ENCODE measurements at regions of chr4 and their contacts with region 1.

Region 1: DNA sequence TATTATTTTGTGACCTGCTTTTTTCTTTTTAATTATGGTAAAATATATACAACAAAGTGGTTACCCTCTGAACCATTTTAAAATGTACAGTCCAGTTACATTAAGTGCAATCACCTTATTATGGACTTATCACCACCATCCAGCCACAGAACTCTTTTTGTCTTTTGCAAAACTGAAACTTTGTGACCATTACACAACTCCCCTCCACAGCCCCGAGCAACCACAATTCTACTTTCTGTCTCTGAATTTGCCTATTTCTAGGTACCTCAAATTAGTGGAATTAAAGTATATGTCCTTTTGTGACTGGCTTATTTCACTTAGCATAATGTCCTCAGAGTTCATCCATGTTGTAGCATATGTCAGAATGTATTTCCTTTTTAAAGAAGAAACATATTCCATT is 39.3 kb upstream of the WWC2 start:
- DNase-seq: no peak
- ATAC-seq: no peak
- H3K4me3 ChIP-seq: no peak overlapping the region
- H3K27ac ChIP-seq: no peak overlapping the region
- H3K4me1 ChIP-seq: peaks cover 0 to 7% (median 0%) of the 10 kb centered on the region in 12 donors
- H3K27me3 ChIP-seq: no peaks in the 10 kb centered on the region
- CTCF ChIP-seq: no peak
- POLR2A ChIP-seq: no peak

Region 2: GRCh38 chr4:182944484-182945213 is 115.1 kb before region 1 on chr4:
- intact Hi-C with region 1: loop called in 2 of 10 experiments (anchors 5 to 10 kb)
- DNase-seq: no peak
- ATAC-seq: no peak
- H3K4me3 ChIP-seq: no peak overlapping the region
- H3K27ac ChIP-seq: no peak overlapping the region
- H3K4me1 ChIP-seq: no peaks in the 10 kb centered on the region
- H3K27me3 ChIP-seq: no peaks in the 10 kb centered on the region
- CTCF ChIP-seq: no peak
- POLR2A ChIP-seq: no peak

Region 3: GRCh38 chr4:183100827-183101226 is 41.0 kb after region 1 on chr4:
- intact Hi-C with region 1: no loop called
- DNase-seq: no peak
- ATAC-seq: no peak
- H3K4me3 ChIP-seq: peak overlapping the region in 10 of 12 donors; percentile 7 to 92 (median 81)
- H3K27ac ChIP-seq: peak overlapping the region in 2 of 12 donors; percentile 96 to 98
- H3K4me1 ChIP-seq: peaks cover 0 to 42% (median 21%) of the 10 kb centered on the region in 12 donors
- H3K27me3 ChIP-seq: peaks cover 0 to 18% (median 0%) of the 10 kb centered on the region in 9 donors
- CTCF ChIP-seq: no peak
- POLR2A ChIP-seq: no peak

Region 4: DNA sequence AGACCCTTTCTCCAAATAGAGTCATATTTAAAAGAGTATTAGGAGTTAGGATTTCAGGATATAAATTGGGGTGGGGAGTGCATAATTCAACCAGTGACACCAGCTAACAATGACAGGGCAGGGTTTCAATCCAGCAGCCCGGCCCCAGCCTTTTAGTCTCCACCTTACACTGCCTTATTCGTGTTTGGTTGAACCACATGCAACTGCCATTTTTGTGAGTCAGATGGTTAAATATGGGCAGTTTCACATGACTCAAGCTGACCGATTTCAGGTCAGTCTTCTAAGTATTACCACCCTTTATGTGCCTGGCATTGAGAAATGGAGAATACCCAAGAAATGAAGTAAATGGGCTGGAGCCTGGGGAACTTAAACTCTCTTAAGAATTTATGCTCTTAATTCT is 948.1 kb after region 1 on chr4:
- intact Hi-C with region 1: no loop called
- DNase-seq: no peak
- ATAC-seq: no peak
- H3K4me3 ChIP-seq: no peak overlapping the region
- H3K27ac ChIP-seq: no peak overlapping the region
- H3K4me1 ChIP-seq: peaks cover 0 to 15% (median 8%) of the 10 kb centered on the region in 12 donors
- H3K27me3 ChIP-seq: no peaks in the 10 kb centered on the region
- CTCF ChIP-seq: no peak
- POLR2A ChIP-seq: no peak

Measured in heart left ventricle (tissue), 16 donors.